ENCODE measurements at regions of chr6 and their contacts with region 1.

Region 1: GRCh38 chr6:74902089-74902488 is 303.8 kb downstream of the COL12A1 start:
- DNase-seq: no peak
- H3K4me3 ChIP-seq: no peak overlapping the region
- H3K27ac ChIP-seq: no peak overlapping the region
- H3K4me1 ChIP-seq: no peaks in the 10 kb centered on the region
- H3K27me3 ChIP-seq: no peaks in the 10 kb centered on the region
- CTCF ChIP-seq: no peak
- POLR2A ChIP-seq: no peak

Region 2: GRCh38 chr6:73969971-73970970 is 931.8 kb before region 1 on chr6:
- intact Hi-C with region 1: loop called in 1 of 2 experiments (anchors 5 kb)
- DNase-seq: peak in 1 of 7 donors; percentile 12
- H3K4me3 ChIP-seq: no peak overlapping the region
- H3K27ac ChIP-seq: no peak overlapping the region
- H3K4me1 ChIP-seq: no peaks in the 10 kb centered on the region
- H3K27me3 ChIP-seq: no peaks in the 10 kb centered on the region
- CTCF ChIP-seq: peak; percentile 19 to 68 (median 48)
- POLR2A ChIP-seq: no peak

Region 3: GRCh38 chr6:74964871-74965441 is 62.9 kb after region 1 on chr6:
- intact Hi-C with region 1: no loop called
- DNase-seq: no peak
- H3K4me3 ChIP-seq: no peak overlapping the region
- H3K27ac ChIP-seq: no peak overlapping the region
- H3K4me1 ChIP-seq: no peaks in the 10 kb centered on the region
- H3K27me3 ChIP-seq: no peaks in the 10 kb centered on the region
- CTCF ChIP-seq: no peak
- POLR2A ChIP-seq: no peak